Endothelial cell of umbilical vein (primary cell): ENCODE measurements at regions of chr9 and their contacts with region 1.

Region 1: DNA sequence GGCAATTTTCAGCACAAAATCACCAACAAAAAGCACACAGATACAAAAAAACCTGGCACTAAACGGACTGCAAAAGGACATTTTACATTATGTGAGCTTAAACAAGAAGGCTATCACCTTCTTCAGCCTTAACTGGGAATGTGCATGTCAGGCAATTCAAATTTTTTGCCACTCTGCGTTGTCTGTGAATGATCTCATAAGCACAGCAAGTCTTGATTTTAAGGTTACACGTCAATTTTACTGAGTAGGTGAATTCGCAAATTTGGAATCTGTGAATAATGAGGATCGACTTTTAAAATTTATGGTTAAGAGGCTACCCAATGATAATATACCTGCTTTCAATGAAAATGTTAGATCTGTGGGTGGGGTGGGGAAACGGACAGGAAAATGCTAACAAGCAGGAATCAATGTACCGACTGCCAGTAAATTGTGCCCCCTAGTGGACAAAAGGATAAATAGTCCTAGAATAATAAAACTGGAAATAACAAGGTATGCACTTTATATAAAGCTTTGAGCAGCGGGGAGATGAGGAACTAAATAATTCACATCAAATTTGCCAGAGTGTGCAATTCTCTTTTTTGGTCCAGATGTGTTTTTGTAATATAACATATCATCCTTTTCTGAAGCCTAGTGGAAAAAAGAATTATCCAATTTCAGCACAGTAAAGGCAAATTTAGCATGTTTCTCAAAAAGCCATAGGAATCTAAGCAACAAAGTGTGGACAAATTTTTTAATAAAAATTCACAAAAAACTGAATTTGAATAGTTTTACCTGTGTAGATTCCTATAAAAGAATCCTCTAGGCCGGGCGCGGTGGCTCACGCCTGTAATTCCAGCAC is 20.5 kb downstream of the EQTN start:
- DNase-seq: peak; percentile 72
- H3K4me3 ChIP-seq: no peak overlapping the region
- H3K27ac ChIP-seq: no peak overlapping the region
- H3K4me1 ChIP-seq: no peaks in the 10 kb centered on the region
- H3K27me3 ChIP-seq: peaks cover 0 to 7% of the 10 kb centered on the region in 2 experiments
- CTCF ChIP-seq: peak; percentile 37 to 53
- POLR2A ChIP-seq: no peak

Region 2: GRCh38 chr9:26744191-26744965 is 532.0 kb before region 1 on chr9:
- CTCF ChIA-PET with region 1: interaction called, 7 read pairs
- POLR2A ChIA-PET with region 1: no interaction called
- dilution Hi-C with region 1: no loop called
- intact Hi-C with region 1: loop called (anchors 1 kb)
- DNase-seq: peak; percentile 38
- H3K4me3 ChIP-seq: no peak overlapping the region
- H3K27ac ChIP-seq: no peak overlapping the region
- H3K4me1 ChIP-seq: no peaks in the 10 kb centered on the region
- H3K27me3 ChIP-seq: peaks cover 4 to 22% of the 10 kb centered on the region in 2 experiments
- CTCF ChIP-seq: peak; percentile 37 to 45
- POLR2A ChIP-seq: no peak

Region 3: DNA sequence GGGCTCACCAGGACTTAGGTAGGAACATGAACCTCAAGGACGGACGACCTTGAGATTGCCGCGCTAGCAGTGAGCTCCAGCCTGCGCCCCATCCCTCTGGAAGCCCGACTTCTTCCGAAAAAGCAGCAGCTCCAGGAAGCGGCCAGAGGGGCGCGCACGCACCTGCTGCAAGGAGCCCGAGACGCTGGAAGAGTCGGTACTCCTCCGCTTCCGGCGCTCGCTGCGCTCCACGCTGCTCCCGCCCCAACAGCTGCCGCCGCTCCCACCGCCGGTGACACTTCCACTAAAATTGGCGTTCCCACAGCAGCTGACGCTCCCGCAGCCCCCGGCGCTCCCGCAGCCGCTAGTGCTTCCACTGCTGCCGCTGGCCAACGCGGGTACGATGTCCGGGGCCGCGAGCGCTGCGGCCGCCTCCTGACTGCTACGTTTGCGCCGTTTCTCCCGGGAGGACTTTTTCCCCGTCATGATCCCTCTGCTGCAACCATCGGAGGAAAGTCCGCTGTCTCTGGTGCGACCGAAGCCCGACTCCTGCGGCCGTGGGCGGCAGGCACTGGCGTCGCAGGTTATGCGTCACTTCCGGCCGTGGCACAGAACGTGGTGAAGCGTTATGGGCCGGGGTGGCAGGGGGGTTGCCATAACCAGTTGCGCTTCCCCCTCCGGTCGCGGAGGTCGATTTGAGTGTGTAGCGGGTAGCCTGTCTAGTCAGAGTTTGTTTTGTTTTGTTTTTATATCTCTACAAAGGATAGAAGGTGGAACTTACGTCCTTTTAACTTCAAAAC is 384.0 kb before region 1 on chr9 and contains the start of gene CAAP1:
- CTCF ChIA-PET with region 1: interaction called, 8 read pairs
- POLR2A ChIA-PET with region 1: no interaction called
- dilution Hi-C with region 1: no loop called
- intact Hi-C with region 1: loop called (anchors 10 kb)
- DNase-seq: peak; percentile 93
- H3K4me3 ChIP-seq: peak within 1 kb of the TSS; percentile 87 to 100 (median 99)
- H3K27ac ChIP-seq: peak within 1 kb of the TSS; percentile 83
- H3K4me1 ChIP-seq: peaks cover 25% of the 10 kb centered on the region
- H3K27me3 ChIP-seq: no peaks in the 10 kb centered on the region
- CTCF ChIP-seq: peak in 1 of 2 donors; percentile 43
- POLR2A ChIP-seq: peak; percentile 94
- total RNA-seq, gene CAAP1: 16.1 and 18.6 TPM in 2 replicates

Region 4: GRCh38 chr9:26955921-26956859 is 320.2 kb before region 1 on chr9 and contains the start of gene IFT74:
- CTCF ChIA-PET with region 1: interaction called, 3 read pairs
- POLR2A ChIA-PET with region 1: no interaction called
- dilution Hi-C with region 1: no loop called
- intact Hi-C with region 1: loop called (anchors 5 kb)
- DNase-seq: peak; percentile 98
- H3K4me3 ChIP-seq: peak within 1 kb of the TSS; percentile 46 to 85 (median 68)
- H3K27ac ChIP-seq: peak within 1 kb of the TSS; percentile 76
- H3K4me1 ChIP-seq: peaks cover 14% of the 10 kb centered on the region
- H3K27me3 ChIP-seq: no peaks in the 10 kb centered on the region
- CTCF ChIP-seq: no peak
- POLR2A ChIP-seq: peak; percentile 81
- total RNA-seq, gene IFT74: 7.8 and 10.8 TPM in 2 replicates

Region 5: DNA sequence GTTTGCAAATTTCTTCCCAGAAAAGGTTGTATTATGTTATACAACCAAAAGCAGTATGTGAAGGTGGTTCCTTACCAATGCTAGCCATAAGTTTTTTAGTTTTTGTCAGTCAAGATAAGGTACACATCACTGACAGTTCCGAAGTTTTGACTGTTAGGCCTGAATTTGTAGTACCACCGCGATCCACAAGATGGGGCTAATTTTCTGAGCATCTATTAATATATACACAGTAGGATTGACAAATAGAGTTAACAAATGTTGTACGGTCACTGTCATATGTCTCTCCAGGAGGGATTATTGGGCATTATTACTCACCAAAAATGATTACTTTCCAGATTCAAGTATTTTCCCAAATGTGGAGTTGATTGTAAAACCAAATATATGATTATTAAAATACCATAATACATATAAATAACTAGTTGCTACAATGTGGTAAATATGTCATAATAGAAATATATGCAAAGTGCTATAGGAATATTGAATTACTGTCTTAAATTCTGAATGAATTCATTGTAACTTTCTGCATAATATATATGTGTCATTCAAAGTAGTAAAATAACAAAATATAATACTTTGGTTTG is 242.5 kb before region 1 on chr9:
- CTCF ChIA-PET with region 1: interaction called, 10 read pairs
- POLR2A ChIA-PET with region 1: no interaction called
- dilution Hi-C with region 1: no loop called
- intact Hi-C with region 1: loop called (anchors 1 kb)
- DNase-seq: peak; percentile 78
- H3K4me3 ChIP-seq: no peak overlapping the region
- H3K27ac ChIP-seq: no peak overlapping the region
- H3K4me1 ChIP-seq: no peaks in the 10 kb centered on the region
- H3K27me3 ChIP-seq: no peaks in the 10 kb centered on the region
- CTCF ChIP-seq: peak; percentile 60 to 62
- POLR2A ChIP-seq: no peak

Region 6: DNA sequence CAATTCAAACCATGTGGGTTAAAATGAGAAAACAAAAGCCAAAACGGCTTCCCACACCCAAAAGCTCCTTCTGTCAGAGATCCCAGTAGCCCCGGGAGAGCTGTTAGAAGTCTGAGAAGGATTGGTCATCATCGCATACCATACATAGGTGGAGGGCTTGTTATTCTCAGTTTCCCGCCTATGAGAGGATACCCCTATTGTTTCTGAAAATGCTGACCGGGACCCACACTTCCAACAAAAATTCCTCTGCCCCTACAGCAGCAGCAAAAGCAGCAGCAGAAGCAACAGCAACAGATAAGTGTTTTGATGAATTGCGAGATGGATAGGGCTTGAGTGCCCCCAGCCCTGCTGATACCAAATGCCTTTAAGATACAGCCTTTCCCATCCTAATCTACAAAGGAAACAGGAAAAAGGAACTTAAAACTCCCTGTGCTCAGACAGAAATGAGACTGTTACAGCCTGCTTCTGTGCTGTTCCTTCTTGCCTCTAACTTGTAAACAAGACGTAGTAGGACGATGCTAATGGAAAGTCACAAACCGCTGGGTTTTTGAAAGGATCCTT is 167.4 kb before region 1 on chr9 and contains the start of gene TEK:
- CTCF ChIA-PET with region 1: interaction called, 4 read pairs
- POLR2A ChIA-PET with region 1: no interaction called
- dilution Hi-C with region 1: no loop called
- intact Hi-C with region 1: loop called (anchors 2 kb)
- DNase-seq: peak; percentile 85
- H3K4me3 ChIP-seq: peak within 1 kb of the TSS; percentile 44 to 99 (median 96)
- H3K27ac ChIP-seq: peak within 1 kb of the TSS; percentile 80
- H3K4me1 ChIP-seq: peaks cover 17% of the 10 kb centered on the region
- H3K27me3 ChIP-seq: no peaks in the 10 kb centered on the region
- CTCF ChIP-seq: no peak
- POLR2A ChIP-seq: peak; percentile 82
- total RNA-seq, gene TEK: 38.9 and 44.1 TPM in 2 replicates

Region 7: GRCh38 chr9:27247756-27248155 is 28.7 kb before region 1 on chr9:
- CTCF ChIA-PET with region 1: interaction called, 12 read pairs
- POLR2A ChIA-PET with region 1: no interaction called
- dilution Hi-C with region 1: no loop called
- intact Hi-C with region 1: no loop called
- DNase-seq: peak; percentile 47
- H3K4me3 ChIP-seq: no peak overlapping the region
- H3K27ac ChIP-seq: no peak overlapping the region
- H3K4me1 ChIP-seq: no peaks in the 10 kb centered on the region
- H3K27me3 ChIP-seq: peaks cover 0 to 2% of the 10 kb centered on the region in 2 experiments
- CTCF ChIP-seq: peak; percentile 51 to 62
- POLR2A ChIP-seq: no peak